ENCODE measurements at regions of chr12 and their contacts with region 1.

Region 1: GRCh38 chr12:102182635-102183034 is 15.0 kb downstream of the PMCH start:
- DNase-seq: peak; percentile 91
- H3K4me3 ChIP-seq: no peak overlapping the region
- H3K27ac ChIP-seq: peak overlapping the region; percentile 61
- H3K4me1 ChIP-seq: peaks cover 19% of the 10 kb centered on the region
- H3K27me3 ChIP-seq: no peaks in the 10 kb centered on the region
- CTCF ChIP-seq: no peak
- POLR2A ChIP-seq: peak; percentile 25

Region 2: GRCh38 chr12:101951002-101951670 is 231.5 kb before region 1 on chr12:
- CTCF ChIA-PET with region 1: no interaction called
- POLR2A ChIA-PET with region 1: no interaction called
- dilution Hi-C with region 1: no loop called
- intact Hi-C with region 1: no loop called
- DNase-seq: no peak
- H3K4me3 ChIP-seq: no peak overlapping the region
- H3K27ac ChIP-seq: no peak overlapping the region
- H3K4me1 ChIP-seq: no peaks in the 10 kb centered on the region
- H3K27me3 ChIP-seq: no peaks in the 10 kb centered on the region
- CTCF ChIP-seq: no peak
- POLR2A ChIP-seq: no peak

Region 3: GRCh38 chr12:102197789-102198188 is 15.2 kb after region 1 on chr12 and contains the start of gene PMCH:
- CTCF ChIA-PET with region 1: interaction called, 4 read pairs
- POLR2A ChIA-PET with region 1: no interaction called
- dilution Hi-C with region 1: no loop called
- intact Hi-C with region 1: loop called (anchors 1 kb)
- DNase-seq: peak; percentile 87
- H3K4me3 ChIP-seq: no peak within 1 kb of the TSS
- H3K27ac ChIP-seq: peak within 1 kb of the TSS; percentile 60
- H3K4me1 ChIP-seq: peaks cover 26% of the 10 kb centered on the region
- H3K27me3 ChIP-seq: no peaks in the 10 kb centered on the region
- CTCF ChIP-seq: no peak
- POLR2A ChIP-seq: no peak
- total RNA-seq, gene PMCH: 1.1 and 1.8 TPM in 2 replicates

Measured in endothelial cell of umbilical vein (primary cell).